ENCODE measurements at regions of chr14 and their contacts with region 1.

Region 1: GRCh38 chr14:56659964-56660551 is 80.5 kb downstream of the TMEM260 start:
- DNase-seq: peak; percentile 27
- H3K4me3 ChIP-seq: no peak overlapping the region
- H3K27ac ChIP-seq: no peak overlapping the region
- H3K4me1 ChIP-seq: no peaks in the 10 kb centered on the region
- H3K27me3 ChIP-seq: no peaks in the 10 kb centered on the region
- CTCF ChIP-seq: peak; percentile 80 to 86

Region 2: DNA sequence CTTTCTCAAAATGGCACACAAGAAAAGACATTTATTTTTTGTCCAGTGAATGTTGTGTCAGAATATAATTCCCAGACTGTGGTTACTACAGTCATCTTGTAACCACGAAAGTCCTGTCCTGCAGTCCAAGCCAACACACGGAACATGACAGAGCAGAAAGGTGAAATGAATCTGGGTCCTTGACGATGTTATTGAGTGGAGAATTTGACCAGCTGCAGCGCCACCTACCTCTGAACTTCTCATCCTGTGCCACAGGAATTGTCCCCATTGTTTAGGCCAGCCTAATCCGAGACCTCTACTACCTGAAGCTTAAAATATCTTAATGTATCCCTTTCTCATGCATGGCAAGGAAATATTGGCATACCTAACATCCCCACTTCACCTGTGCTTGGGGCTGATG is 214.3 kb after region 1 on chr14:
- CTCF ChIA-PET with region 1: no interaction called
- dilution Hi-C with region 1: no loop called
- in situ Hi-C with region 1: no loop called
- intact Hi-C with region 1: loop called (anchors 1 kb)
- DNase-seq: peak; percentile 9
- H3K4me3 ChIP-seq: no peak overlapping the region
- H3K27ac ChIP-seq: no peak overlapping the region
- H3K4me1 ChIP-seq: no peaks in the 10 kb centered on the region
- H3K27me3 ChIP-seq: no peaks in the 10 kb centered on the region
- CTCF ChIP-seq: peak; percentile 23 to 46

Region 3: GRCh38 chr14:57182760-57183503 is 522.9 kb after region 1 on chr14:
- CTCF ChIA-PET with region 1: no interaction called
- dilution Hi-C with region 1: no loop called
- in situ Hi-C with region 1: loop called in 1 of 2 experiments (anchors 25 kb)
- intact Hi-C with region 1: loop called (anchors 1 kb)
- DNase-seq: peak; percentile 2
- H3K4me3 ChIP-seq: no peak overlapping the region
- H3K27ac ChIP-seq: no peak overlapping the region
- H3K4me1 ChIP-seq: no peaks in the 10 kb centered on the region
- H3K27me3 ChIP-seq: peaks cover 1% of the 10 kb centered on the region
- CTCF ChIP-seq: peak; percentile 41 to 51

Region 4: GRCh38 chr14:57378669-57379068 is 718.6 kb after region 1 on chr14:
- CTCF ChIA-PET with region 1: no interaction called
- dilution Hi-C with region 1: no loop called
- in situ Hi-C with region 1: no loop called
- intact Hi-C with region 1: loop called (anchors 5 kb)
- DNase-seq: no peak
- H3K4me3 ChIP-seq: no peak overlapping the region
- H3K27ac ChIP-seq: no peak overlapping the region
- H3K4me1 ChIP-seq: peaks cover 22% of the 10 kb centered on the region
- H3K27me3 ChIP-seq: no peaks in the 10 kb centered on the region
- CTCF ChIP-seq: peak; percentile 18 to 30

Measured in mammary epithelial cell (primary cell).